ENCODE measurements at regions of chr1 and their contacts with region 1.

Region 1: GRCh38 chr1:43073490-43074230 is 98.4 kb downstream of the EBNA1BP2 start:
- DNase-seq: peak; percentile 79
- CTCF ChIP-seq: peak; percentile 81

Region 2: GRCh38 chr1:42756956-42757891 is 316.4 kb before region 1 on chr1:
- CTCF ChIA-PET with region 1: interaction called, 14 read pairs
- POLR2A ChIA-PET with region 1: no interaction called
- DNase-seq: peak; percentile 74
- CTCF ChIP-seq: peak; percentile 63

Region 3: DNA sequence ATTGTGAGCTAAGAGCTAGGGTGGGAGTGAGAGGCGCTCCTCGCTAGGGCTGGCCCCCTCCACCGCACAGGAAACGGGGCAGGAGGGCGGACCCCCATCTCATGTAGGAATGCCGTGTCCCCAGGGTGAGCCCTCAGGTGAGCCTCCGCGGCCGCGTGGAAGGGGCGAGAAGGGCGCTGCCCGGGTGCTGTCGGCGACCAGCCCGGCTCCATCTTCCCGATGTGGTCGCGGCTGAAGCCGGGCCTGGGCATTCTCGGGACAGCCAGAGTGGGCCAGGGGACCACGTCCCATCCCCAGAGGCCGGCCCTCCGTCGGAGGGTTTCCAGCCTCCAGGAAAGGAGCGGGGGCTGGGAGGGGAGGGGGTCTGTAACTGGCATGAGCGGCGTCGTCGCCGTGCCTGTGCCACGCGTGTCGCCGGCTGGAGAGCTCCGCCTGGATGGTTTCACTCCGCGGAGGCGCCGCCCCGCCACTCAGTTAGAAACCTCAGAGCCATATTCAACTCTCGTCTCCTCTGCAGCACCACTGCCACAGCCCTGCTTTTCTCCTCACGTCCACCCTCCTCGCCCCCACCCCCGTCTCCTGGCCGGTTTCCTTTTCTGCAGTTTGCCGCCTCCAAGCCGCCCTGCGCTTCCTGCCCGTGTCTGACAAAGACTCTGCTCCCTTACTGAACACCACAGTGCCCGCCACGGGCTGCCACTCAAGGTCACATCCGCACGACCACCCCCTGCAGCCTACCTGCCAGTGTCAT is 288.5 kb before region 1 on chr1 and contains the start of gene TMEM269:
- CTCF ChIA-PET with region 1: interaction called, 178 read pairs
- POLR2A ChIA-PET with region 1: no interaction called
- DNase-seq: peak; percentile 67
- CTCF ChIP-seq: no peak

Region 4: DNA sequence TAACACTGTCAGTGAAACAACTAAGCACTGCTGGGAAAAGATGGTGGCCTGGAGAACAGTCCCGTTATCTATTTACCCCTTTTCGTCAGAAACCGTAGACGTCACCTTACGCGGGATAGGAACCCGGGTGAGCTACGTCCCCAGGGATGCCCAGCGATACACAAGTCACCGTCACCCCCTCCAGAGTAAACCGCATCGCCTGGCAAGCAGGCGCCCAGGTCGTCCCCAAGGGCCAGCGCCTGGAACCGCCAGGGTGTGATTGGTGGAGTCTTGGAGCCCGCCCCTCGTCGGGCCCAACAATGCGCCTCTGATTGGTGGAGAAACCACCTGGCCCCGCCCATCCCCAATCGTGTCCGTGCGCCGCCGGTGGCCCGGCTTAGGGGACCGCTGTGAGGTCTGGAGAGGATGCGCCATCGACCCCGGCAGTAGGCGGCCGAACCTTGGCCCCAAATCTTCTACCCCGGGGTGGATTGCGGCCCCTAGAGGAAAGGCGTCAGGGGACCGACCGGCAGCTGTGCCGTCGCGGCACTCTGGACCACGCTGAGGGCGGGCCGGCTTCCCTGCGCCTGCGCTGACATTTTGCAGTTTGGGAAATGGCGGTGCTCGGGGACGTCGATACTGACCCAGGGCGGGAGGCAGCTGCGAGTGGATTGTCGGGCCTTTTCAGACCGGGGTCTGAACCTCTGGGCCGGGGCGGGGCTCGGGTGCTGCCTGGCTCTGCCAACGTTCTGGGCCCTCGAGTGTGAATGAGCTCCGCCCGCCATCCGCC is 149.4 kb before region 1 on chr1:
- CTCF ChIA-PET with region 1: interaction called, 81 read pairs
- POLR2A ChIA-PET with region 1: no interaction called
- DNase-seq: peak; percentile 94
- CTCF ChIP-seq: no peak

Region 5: DNA sequence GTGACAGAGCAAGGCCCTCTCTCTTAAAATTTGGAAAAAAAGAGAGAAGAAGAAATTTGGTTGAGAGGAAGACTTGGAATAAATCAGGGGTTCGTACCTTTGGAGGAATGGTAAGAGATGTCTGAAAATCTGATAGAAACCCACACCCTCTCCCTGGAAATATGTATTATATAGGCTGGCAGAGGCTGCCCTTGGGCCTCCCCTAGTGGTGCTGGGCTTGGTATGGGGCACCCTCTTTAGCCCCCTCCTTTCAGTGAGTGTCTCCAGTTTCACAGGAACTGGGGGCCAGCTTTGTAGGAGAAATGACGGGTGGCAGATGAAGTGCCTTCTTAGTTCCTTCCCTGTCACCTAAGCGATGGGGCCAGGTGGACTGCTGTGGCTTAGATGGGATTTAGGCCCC is 32.1 kb before region 1 on chr1:
- CTCF ChIA-PET with region 1: interaction called, 15 read pairs
- POLR2A ChIA-PET with region 1: no interaction called
- DNase-seq: no peak
- CTCF ChIP-seq: no peak

Region 6: GRCh38 chr1:43317817-43318471 is 244.3 kb after region 1 on chr1:
- CTCF ChIA-PET with region 1: no interaction called
- POLR2A ChIA-PET with region 1: no interaction called
- DNase-seq: no peak
- CTCF ChIP-seq: no peak

Measured in GM10248 (cell line).